Activated naive CD4-positive, alpha-beta T cell treated with anti-CD3 and anti-CD28 coated beads for 36 hours (primary cell): ENCODE measurements at regions of chr19 and their contacts with region 1.

Region 1: GRCh38 chr19:40444192-40445028 is at the start of gene SERTAD3:
- DNase-seq: peak; percentile 96
- H3K4me3 Mint-ChIP-seq: peak within 1 kb of the TSS; percentile 97
- H3K27ac Mint-ChIP-seq: peak within 1 kb of the TSS; percentile 92
- H3K4me1 Mint-ChIP-seq: peaks cover 19% of the 10 kb centered on the region
- H3K27me3 Mint-ChIP-seq: no peaks in the 10 kb centered on the region
- total RNA-seq, gene SERTAD3: 3.8 to 7.3 TPM

Region 2: DNA sequence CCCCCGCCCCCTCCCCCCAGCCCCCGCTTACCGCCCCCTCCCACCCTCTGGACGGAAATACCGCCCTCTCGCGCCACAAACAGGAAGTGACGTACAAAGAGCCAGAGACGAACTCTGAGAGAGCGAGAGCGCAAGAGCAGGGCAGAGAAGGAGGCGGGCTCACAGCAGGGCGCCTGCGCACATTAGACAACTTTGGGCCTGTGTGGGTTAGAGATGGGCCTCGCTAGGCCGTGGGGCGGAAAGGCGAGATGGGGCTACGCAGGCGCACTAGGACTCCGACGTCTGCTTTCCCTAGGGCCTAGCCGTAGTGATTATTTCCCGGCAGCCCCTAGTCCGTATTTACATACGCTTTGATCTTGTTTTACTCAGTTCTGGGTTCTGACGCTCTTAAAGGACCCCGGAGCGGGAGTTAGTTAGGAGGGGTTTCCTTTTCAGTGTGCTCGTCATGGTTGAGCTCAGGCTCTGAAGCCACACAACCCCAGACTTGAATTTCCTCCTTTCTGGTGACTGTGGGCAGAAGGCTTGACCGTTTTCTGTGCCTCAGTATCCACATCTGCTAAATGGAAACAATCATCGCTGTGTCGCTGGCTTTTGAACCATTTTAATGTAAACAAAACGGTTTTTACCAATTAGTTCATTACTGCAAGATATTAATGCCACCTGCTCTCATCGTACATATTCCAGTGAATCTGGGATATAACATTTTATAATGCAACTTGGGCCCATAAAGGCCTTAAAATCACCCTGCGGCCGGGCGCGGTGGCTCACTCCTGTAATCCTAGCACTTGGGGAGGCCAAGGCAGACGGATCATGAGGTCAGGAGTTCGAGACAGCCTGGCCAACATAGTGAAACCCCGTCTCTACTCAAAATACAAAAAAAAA is 158.8 kb before region 1 on chr19:
- CTCF ChIA-PET with region 1: no interaction called
- intact Hi-C with region 1: loop called (anchors 1 kb)
- DNase-seq: peak; percentile 99
- H3K4me3 Mint-ChIP-seq: peak overlapping the region; percentile 97
- H3K27ac Mint-ChIP-seq: peak overlapping the region; percentile 99
- H3K4me1 Mint-ChIP-seq: peaks cover 47% of the 10 kb centered on the region
- H3K27me3 Mint-ChIP-seq: no peaks in the 10 kb centered on the region

Region 3: DNA sequence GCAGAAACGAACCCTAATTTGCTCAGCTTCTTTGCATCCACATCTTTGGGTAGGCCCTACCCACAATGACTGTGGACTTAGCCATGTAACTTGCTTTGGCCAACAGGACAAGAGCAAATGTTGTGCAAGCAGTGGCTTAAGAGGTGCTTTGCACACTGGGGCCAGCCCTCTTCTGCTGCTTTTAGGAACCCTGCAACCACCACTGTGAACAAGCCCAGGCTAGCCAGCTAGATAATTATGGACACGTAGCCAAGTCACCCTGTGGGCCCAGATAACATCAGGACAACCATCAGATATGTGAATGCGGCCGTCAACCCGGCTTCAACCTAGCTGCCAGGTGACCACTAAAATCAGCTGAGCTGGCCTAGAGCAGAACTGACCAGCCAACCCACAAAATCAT is 113.3 kb before region 1 on chr19:
- CTCF ChIA-PET with region 1: no interaction called
- intact Hi-C with region 1: no loop called
- DNase-seq: no peak
- H3K4me3 Mint-ChIP-seq: no peak overlapping the region
- H3K27ac Mint-ChIP-seq: no peak overlapping the region
- H3K4me1 Mint-ChIP-seq: no peaks in the 10 kb centered on the region
- H3K27me3 Mint-ChIP-seq: no peaks in the 10 kb centered on the region

Region 4: GRCh38 chr19:40403262-40403984 is 41.0 kb before region 1 on chr19:
- CTCF ChIA-PET with region 1: interaction called, 4 read pairs
- intact Hi-C with region 1: loop called (anchors 1 kb)
- DNase-seq: peak; percentile 91
- H3K4me3 Mint-ChIP-seq: peak overlapping the region; percentile 83
- H3K27ac Mint-ChIP-seq: peak overlapping the region; percentile 65
- H3K4me1 Mint-ChIP-seq: peaks cover 13% of the 10 kb centered on the region
- H3K27me3 Mint-ChIP-seq: no peaks in the 10 kb centered on the region

Region 5: DNA sequence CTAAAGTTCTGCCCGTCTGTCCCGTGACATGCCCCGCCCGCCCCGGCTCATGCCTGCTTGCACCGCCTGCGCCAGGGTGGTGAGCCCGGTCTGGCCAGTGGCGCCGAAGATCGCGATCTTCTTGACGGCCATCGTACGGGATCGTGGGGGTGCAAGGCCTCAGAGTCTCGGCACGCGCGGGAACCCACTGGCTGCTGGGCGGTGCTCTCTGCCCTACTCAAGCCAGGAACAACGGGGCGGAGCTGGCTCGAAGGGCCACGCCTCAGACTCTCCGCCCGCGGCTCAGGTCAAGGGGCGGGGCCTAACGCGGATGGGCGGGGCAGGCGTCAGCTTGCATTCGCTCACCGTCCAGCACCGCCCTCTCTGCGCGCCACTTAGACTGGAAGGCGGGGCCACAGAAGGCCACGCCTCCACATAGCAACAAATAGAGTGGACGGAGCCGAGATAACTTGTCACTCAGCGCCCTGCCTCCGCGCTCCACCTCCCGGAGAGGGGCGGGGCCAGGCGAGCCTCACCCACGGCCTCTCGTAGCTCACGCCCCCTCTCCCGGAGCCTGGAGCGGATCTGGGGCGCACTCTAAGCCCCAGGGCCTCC is 21.2 kb after region 1 on chr19 and contains the start of gene BLVRB:
- CTCF ChIA-PET with region 1: interaction called, 10 read pairs
- intact Hi-C with region 1: loop called (anchors 1 kb)
- DNase-seq: peak; percentile 100
- H3K4me3 Mint-ChIP-seq: peak within 1 kb of the TSS; percentile 78
- H3K27ac Mint-ChIP-seq: peak within 1 kb of the TSS; percentile 50
- H3K4me1 Mint-ChIP-seq: peaks cover 26% of the 10 kb centered on the region
- H3K27me3 Mint-ChIP-seq: peaks cover 10% of the 10 kb centered on the region
- total RNA-seq, gene BLVRB: 29.4 to 30.2 TPM

Region 6: DNA sequence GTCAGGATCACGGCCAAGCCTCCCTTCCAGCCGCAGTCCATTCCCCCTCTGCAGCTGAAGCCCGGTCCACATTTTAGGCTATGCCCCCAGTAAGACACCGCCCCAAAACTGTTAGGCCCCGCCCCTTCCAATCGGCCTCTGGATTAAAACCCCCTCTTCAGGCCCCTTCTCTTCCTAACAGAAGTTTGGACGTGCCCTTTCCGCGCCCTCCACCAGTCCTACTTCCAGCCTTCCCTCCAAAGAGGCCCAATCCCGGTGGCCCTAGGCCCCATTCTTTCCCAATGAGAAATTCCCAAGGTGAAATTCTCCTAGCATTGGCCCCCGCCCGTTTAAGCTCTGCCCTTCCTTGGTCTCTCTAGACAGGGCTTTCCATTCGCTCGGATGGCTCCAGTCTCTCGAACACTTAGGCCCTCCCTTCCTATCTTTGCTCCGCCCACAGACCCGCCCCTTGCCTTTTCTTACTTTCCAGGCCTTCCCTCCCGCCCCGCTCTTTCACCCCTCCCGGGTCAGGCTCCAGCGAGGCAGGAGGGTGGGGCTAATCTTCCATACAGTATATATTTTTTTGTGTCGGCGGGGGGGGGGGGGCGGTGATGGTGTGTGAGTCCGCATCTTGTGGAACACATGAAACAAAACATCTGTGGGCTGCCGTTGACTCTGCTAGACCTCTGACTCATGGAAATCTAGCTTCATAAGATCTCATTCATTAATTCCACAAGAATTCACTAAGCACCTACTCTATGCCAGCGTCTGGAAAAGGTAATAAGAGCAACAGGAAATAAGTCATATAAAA is 170.4 kb after region 1 on chr19:
- CTCF ChIA-PET with region 1: no interaction called
- intact Hi-C with region 1: loop called (anchors 1 kb)
- DNase-seq: peak; percentile 98
- H3K4me3 Mint-ChIP-seq: peak overlapping the region; percentile 88
- H3K27ac Mint-ChIP-seq: peak overlapping the region; percentile 97
- H3K4me1 Mint-ChIP-seq: peaks cover 67% of the 10 kb centered on the region
- H3K27me3 Mint-ChIP-seq: no peaks in the 10 kb centered on the region

Region 7: DNA sequence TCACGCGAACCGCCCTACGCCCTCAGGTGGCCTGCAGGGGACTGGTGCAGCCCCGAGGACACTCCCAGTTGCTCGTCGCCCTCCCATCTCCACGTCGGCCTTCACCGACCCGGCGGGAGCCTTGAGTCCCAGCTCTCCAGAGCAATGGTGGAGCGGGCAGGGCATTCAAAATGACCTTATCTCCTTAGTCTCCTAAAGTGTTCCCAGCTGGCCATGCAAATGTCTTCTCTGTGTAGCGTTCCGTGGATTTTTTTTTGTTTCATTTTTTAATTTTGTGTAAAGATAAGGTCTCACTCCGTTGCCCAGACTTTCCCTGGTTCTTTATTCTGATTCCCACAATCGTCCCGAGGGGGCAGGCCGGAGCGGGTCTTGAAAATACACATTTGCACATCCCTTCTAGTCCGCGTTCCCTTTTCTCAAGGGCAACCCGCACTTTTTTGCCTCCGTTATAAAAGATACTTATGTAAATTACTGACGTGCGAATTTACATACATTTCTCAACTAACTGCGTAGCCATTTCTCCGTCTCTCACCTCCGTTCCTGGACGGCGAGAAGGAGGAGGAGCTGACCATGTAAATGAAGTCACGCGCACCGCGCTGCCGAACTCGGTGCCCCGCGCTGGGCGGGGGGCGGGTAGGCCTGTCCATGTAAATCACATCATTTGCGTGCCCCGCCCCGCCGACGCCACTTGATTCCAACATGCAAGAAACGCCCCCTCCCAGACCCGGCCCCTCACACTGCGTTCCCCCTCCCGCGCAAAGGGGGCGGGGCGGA is 354.0 kb after region 1 on chr19:
- CTCF ChIA-PET with region 1: no interaction called
- intact Hi-C with region 1: loop called (anchors 5 kb)
- DNase-seq: peak; percentile 100
- H3K4me3 Mint-ChIP-seq: peak overlapping the region; percentile 92
- H3K27ac Mint-ChIP-seq: peak overlapping the region; percentile 97
- H3K4me1 Mint-ChIP-seq: peaks cover 49% of the 10 kb centered on the region
- H3K27me3 Mint-ChIP-seq: no peaks in the 10 kb centered on the region